Activated CD8-positive, alpha-beta memory T cell treated with anti-CD3 and anti-CD28 coated beads, Interleukin-2, amount 10 ng/mL, durations not matched to agents 7 days and 5 days (primary cell): ENCODE measurements at regions of chr4 and their contacts with region 1.

Region 1: DNA sequence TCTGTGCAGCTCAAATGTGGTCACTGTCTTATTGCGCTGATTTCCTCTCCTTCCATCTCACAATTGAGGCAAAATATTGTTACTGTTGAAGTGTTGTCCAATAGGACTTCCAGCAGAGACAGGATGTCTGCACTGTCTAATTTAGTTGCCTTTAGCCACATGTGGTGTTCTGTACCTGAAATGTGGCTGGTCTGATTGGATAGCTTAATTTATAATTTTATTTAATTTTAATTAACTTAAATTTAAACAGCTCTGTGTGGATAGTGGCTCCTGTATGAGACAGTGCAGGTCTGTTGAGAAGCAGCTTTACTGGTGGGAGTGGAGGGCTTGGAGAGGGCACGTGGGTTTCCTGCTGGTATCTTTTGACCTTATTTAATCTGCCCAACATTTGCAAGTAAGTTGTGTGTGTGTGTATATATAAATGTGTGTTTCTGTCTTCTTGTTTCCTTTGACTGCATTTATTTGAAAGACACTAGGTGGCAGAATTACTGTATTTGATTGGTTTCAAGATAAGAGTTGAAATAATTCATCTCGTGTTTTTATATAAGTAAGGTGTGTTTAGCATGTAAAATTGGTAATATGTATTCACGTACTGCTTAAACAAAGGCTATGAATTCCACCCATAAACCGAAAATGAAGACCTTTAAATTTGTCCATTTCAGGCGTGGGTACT is 55.3 kb upstream of the MSANTD1 start:
- DNase-seq: no peak
- ATAC-seq: no peak
- H3K4me3 Mint-ChIP-seq: no peak overlapping the region
- H3K27ac Mint-ChIP-seq: peak overlapping the region; percentile 57
- H3K4me1 Mint-ChIP-seq: peaks cover 60% of the 10 kb centered on the region
- H3K27me3 Mint-ChIP-seq: no peaks in the 10 kb centered on the region

Region 2: DNA sequence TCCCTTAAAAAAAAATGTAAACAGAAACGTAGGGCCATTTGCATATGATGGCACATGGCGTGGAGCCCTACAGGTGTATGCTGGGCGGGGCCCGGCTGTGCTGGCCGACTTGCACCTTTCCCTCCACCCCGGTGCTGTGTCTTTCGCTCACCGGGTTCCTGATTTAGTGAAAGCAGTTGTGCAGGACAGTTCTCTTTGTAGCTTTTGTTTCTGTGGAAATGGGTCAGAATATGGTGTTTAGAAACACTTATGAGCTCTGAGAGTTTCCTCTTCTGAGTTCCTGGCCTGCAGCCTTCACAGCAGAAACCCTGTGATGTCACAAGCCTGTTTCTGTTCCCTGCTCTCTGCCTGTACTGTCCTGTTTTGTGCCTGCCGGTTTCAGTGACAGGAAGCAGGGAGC is 32.8 kb after region 1 on chr4:
- CTCF ChIA-PET with region 1: interaction called, 10 read pairs
- DNase-seq: no peak
- ATAC-seq: no peak
- H3K4me3 Mint-ChIP-seq: no peak overlapping the region
- H3K27ac Mint-ChIP-seq: peak overlapping the region; percentile 49
- H3K4me1 Mint-ChIP-seq: peaks cover 1% of the 10 kb centered on the region
- H3K27me3 Mint-ChIP-seq: no peaks in the 10 kb centered on the region

Region 3: DNA sequence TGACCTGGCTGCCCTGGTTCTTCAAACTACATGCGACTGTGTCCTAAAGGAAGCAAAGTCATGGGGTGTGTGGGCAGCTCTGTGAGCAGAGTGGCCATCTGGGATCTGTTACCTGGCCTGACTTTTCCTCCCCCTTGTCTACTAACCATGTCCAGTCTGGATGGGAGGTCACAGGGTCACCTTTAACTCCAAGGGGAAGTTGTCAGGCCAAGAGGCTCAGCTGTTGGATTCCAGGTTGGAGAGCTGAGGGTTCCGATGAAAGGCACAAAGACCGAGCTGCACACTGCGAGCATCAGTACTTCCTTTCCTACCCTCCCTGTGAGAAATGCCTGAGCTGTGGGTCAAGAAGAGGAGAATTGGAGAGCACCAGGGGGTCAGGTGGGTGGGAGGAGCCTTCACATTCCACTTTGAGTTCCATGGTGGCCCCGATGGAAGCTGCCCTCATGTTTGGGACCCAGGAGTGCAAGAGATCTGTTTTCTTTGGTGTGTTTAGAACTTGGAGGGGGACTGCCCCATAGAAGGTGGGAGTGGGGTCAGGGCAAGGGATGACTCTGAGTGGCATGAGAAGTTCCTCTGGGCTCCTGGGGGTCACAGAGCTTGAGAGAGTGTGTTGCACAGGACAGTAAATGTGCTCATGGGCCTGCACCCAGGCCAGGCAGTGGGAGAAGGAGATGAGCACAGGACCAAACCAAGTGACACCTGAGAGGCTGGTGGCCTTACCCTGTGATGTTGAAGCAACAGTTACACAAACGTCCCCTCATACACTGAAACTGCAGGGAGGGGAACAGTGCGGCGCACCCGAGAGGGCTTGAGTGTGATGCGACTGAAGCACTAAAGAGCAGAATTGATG is 135.4 kb after region 1 on chr4:
- CTCF ChIA-PET with region 1: no interaction called
- DNase-seq: peak; percentile 33
- ATAC-seq: no peak
- H3K4me3 Mint-ChIP-seq: no peak overlapping the region
- H3K27ac Mint-ChIP-seq: no peak overlapping the region
- H3K4me1 Mint-ChIP-seq: peaks cover 3% of the 10 kb centered on the region
- H3K27me3 Mint-ChIP-seq: peaks cover 15% of the 10 kb centered on the region

Region 4: DNA sequence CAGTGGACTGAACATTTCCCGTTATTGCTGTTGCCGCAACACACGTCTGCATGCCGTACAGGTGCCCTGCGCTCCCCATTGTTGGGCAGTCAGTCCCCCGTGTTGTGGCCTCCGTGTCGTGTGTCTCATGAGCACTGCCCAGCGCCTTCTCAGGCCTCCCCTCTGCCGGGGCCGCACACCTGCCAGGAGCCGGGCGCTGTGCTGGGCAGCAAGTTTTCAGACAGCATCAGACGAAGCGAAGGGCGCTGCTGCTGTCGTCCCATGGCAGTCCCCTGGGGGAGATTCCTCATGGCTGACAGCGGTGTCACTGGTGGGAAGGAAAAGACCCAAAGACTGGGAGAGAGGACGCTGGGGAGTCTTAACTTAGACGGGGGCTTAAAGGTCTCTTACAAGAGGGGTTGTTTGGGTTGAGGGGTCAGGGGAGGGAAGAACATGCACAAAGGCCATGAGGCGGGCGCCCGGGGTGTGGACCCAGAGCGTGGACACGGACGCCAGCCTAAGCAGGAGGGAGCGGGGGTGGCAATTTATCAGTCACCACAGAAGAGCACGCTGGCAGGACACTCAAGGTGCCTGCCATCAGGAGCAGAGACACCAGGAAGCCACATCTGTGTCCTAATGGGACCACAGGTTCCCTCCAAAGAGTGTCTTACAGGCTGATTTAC is 146.5 kb after region 1 on chr4:
- CTCF ChIA-PET with region 1: no interaction called
- DNase-seq: peak; percentile 33
- ATAC-seq: no peak
- H3K4me3 Mint-ChIP-seq: no peak overlapping the region
- H3K27ac Mint-ChIP-seq: no peak overlapping the region
- H3K4me1 Mint-ChIP-seq: peaks cover 5% of the 10 kb centered on the region
- H3K27me3 Mint-ChIP-seq: no peaks in the 10 kb centered on the region

Region 5: DNA sequence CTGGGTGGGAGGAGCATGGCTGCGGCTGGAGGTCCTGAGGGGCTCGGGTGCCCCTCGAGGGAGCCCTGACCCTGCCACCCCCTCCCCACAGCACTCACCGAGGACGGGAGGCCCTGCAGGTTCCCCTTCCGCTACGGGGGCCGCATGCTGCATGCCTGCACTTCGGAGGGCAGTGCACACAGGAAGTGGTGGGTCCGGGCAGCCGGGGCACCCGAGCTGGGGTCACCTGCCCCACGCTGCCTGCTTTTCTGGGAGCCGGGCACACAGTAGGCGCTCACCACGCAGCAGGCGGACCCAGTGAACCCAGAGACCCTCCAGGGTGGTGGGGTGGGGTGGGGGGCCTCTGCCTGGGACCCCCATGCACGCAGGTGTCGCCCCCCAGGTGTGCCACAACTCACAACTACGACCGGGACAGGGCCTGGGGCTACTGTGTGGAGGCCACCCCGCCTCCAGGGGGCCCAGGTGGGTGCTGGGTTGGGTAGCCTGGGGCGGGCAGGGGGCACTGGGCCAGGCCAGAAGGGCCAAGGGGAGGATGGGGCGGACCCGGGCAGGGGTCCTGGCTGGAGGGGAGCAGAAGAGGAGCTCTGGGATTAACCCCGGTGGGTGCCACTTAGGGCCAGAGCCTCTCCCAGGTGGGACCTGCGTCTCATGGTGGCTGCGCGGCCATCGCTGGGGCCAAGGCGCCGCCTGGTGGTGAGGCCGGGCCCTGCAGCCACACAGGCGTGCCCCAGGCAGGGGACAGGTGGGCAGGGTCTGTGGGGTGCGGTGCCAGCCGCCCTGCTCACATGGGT is 249.5 kb after region 1 on chr4:
- CTCF ChIA-PET with region 1: interaction called, 21 read pairs
- DNase-seq: peak; percentile 68
- ATAC-seq: peak; percentile 82
- H3K4me3 Mint-ChIP-seq: no peak overlapping the region
- H3K27ac Mint-ChIP-seq: no peak overlapping the region
- H3K4me1 Mint-ChIP-seq: no peaks in the 10 kb centered on the region
- H3K27me3 Mint-ChIP-seq: no peaks in the 10 kb centered on the region